ENCODE measurements at regions of chr3 and their contacts with region 1.

Region 1: DNA sequence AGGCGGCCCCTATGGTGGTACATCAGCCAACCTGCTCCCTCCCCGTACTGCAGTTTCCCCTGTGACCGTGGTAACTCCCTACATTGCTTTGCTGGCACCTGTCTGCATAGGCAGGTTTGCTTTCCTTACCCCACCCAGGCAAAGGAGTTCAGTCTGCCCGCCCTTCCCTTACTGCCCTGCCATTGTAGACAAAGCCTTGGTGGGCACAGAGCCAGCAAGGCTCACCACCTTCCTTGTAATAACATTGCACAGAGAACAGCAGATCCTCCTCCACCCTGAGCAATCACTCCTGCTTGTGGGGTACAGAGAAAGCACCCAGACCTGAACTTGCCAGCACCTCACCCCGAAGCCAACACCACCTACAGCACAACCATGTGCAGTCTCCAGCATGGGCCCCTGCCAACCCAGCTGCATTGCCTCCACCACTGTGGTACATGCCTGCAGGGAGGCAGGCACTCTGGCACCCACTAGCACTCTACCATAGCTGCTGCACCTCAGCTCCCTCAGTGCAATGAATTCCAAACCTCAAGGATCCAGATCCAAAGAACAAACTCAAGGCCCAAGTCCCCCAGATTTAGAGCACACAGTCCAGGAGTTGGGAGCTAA is 192.7 kb upstream of the KCNMB2 start:
- DNase-seq: no peak
- H3K4me3 ChIP-seq: no peak overlapping the region
- CTCF ChIP-seq: no peak

Region 2: GRCh38 chr3:178382449-178383061 is 39.0 kb after region 1 on chr3:
- in situ Hi-C with region 1: loop called (anchors 5 kb)
- DNase-seq: peak; percentile 69
- H3K4me3 ChIP-seq: no peak overlapping the region
- CTCF ChIP-seq: no peak

Measured in astrocyte of the cerebellum (primary cell).